Activated T-helper 1 cell treated with anti-CD3 and anti-CD28 coated beads, Interleukin-12 subunit alpha, Interleukin-12 subunit beta, Interleukin-2, Interleukin-4 antibody, amounts not matched to agents 30 ng/mL and 10 ng/mL and 1 ng/mL, durations not matched to agents 14 hours and 24 hours and 36 hours (primary cell): ENCODE measurements at regions of chr12 and their contacts with region 1.

Region 1: DNA sequence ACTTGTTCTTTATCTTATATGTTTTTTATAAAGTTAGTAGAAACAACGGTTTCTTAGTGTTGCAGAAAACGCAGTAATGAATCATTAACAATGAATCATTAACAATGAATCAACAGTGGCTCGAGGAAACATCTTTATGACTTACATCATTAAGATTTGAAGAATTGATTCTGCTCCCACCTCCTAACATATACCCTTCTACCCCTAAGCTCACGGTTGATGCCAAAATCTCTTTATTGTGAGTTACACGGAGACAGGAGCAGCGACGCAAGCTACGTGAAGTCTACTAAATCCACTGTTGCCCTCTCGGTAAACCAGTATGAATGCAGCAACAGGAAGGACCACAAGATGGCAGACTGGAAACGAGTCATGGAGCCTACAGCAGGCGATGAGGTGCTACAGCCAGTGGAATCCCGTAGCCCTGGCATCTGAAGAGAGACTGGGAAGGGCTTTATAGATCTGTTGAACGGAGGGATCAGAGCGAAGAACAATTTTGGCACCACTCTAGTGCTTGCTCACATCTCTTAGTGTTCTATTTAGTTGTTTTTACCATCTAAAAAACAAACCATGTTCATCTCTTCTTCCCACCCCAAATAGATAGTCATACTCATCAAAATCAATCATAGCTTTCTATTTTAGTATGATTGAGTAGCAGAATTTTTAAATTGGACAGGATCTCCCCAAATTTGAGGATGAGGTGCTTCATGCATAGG is 332.7 kb downstream of the DUSP6 start:
- DNase-seq: peak; percentile 73
- H3K4me3 Mint-ChIP-seq: no peak overlapping the region
- H3K27ac Mint-ChIP-seq: no peak overlapping the region
- H3K4me1 Mint-ChIP-seq: peaks cover 31% of the 10 kb centered on the region
- H3K27me3 Mint-ChIP-seq: peaks cover 12% of the 10 kb centered on the region

Region 2: DNA sequence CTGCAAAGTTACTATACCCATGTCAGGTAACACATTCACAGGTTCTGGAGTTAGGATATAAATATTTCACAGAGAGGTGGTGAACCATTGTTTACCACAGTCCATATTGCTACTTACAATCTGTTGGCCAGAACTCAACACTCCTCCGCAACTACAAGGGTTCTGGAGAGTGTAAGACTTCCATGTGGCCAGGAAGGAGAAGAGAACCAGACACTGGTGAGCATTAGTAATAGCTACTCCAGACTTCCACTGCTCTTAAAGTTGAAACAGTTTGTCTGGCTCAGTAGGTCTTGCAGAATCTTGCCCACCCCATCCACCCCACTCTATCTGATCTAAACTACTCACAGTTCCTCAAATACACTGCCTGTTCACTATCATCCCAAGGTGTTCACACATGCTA is 36.9 kb before region 1 on chr12:
- intact Hi-C with region 1: no loop called
- DNase-seq: no peak
- H3K4me3 Mint-ChIP-seq: no peak overlapping the region
- H3K27ac Mint-ChIP-seq: no peak overlapping the region
- H3K4me1 Mint-ChIP-seq: no peaks in the 10 kb centered on the region
- H3K27me3 Mint-ChIP-seq: peaks cover 11% of the 10 kb centered on the region

Region 3: DNA sequence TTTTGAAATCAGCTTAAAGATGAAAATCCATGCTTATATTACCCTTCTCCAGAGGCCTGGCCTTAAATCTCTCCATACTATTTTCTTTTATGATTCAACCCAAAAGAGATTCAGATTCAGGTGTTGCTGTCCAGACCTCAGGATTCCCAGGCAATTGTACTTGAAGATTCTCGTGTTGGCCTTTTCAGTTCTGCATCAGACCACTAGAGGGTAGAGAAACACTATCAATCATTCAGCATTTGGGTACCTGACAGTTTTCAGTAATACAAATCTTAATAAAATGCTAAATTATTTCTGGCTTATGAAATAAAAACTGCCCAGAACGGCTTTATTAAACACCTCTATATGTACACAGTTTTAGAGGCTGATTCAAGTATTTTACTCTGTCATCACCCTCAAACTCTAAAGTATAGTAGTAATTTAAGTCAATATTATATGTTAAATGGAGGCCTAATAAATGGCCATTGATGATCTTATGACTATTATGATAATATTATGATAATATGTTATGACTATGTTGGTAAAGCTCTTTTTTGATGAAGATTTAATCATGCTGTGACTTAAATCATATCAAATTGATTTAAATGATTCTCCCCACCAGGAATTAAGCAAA is 31.6 kb after region 1 on chr12:
- intact Hi-C with region 1: loop called (anchors 1 kb)
- DNase-seq: no peak
- H3K4me3 Mint-ChIP-seq: no peak overlapping the region
- H3K27ac Mint-ChIP-seq: no peak overlapping the region
- H3K4me1 Mint-ChIP-seq: peaks cover 31% of the 10 kb centered on the region
- H3K27me3 Mint-ChIP-seq: no peaks in the 10 kb centered on the region

Region 4: DNA sequence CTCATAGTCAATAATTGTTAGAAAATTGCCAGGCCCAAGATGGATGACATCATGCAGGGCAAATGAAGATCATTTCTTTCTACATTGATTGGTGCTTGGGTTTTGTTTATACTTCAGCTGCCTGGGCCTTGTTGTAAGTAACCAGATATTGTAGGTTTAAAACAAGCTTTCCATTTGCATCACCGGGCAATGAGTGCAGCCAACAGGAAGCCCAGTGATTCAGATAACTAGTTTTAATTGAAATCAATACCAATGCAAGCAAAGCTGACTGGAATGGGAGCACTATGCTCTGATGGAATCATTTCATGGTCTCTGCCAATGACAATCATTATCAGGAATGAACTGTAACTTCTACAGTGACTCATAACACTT is 53.4 kb after region 1 on chr12:
- intact Hi-C with region 1: no loop called
- DNase-seq: no peak
- H3K4me3 Mint-ChIP-seq: no peak overlapping the region
- H3K27ac Mint-ChIP-seq: peak overlapping the region; percentile 5
- H3K4me1 Mint-ChIP-seq: peaks cover 31% of the 10 kb centered on the region
- H3K27me3 Mint-ChIP-seq: no peaks in the 10 kb centered on the region

Region 5: DNA sequence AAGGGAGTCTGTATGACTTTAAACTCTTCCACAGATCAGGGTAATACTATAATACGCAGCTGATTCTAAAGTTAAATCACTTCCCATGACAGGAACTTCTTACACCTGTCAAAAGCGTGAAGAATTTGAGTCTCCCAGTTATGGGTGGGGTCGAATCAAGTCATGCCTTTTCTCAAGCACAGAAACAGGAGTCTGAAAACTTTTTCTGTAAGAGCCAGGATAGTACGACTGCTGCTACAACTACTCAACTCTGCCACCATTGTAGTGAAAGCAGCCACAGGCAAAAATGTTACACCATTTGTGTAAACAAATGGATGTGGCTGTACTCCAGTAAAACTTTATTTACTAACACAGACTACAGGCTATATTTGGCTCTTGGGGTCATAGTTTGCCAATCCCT is 242.4 kb after region 1 on chr12:
- intact Hi-C with region 1: loop called (anchors 1 kb)
- DNase-seq: no peak
- H3K4me3 Mint-ChIP-seq: no peak overlapping the region
- H3K27ac Mint-ChIP-seq: no peak overlapping the region
- H3K4me1 Mint-ChIP-seq: peaks cover 34% of the 10 kb centered on the region
- H3K27me3 Mint-ChIP-seq: no peaks in the 10 kb centered on the region

Region 6: DNA sequence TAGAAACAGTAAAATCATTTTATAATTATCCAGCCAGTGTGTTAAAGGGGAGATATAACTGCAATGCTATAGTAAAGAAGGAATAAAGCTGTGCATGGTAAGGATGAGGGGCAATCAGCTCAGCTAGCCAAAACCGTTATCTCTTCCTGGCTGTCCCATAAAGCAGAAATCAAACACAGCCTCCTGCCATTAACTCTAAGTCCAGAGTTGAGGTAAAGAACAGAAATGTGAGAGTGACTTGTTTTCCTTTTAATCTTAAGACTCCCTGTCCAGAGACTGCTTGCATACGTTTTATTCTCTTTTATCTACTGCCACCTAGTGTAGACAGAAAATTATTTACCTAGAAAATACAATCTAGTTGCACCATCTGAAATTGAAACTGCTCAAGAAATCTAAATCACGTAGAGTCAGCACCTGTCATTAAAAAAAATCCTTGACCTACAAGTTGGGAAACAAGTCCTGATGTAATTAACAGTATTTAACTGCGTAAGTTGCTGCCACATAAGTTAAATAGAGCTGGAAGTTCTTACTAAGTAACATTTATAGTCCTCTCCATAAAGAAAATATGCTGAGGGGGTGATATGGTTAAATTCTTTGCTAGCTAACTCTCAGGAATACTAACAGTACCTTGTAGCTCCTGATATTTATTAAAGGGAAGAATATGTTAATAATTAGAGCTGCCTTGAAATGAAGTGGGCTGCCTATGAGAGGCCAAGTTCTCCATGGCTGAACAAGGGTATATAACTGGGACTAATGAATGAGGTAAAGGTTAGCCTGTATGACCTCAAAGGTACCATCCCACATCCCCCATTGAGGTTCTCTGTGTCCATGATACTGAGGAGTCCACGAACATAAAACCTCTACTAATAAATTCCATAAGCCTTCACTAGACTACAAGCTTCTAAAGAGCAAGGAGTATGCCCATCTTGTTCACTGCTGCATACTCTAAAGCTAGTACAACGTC is 442.4 kb after region 1 on chr12:
- intact Hi-C with region 1: loop called (anchors 1 kb)
- DNase-seq: no peak
- H3K4me3 Mint-ChIP-seq: peak overlapping the region; percentile 60
- H3K27ac Mint-ChIP-seq: peak overlapping the region; percentile 36
- H3K4me1 Mint-ChIP-seq: peaks cover 43% of the 10 kb centered on the region
- H3K27me3 Mint-ChIP-seq: no peaks in the 10 kb centered on the region

Region 7: GRCh38 chr12:89494411-89495231 is 475.1 kb after region 1 on chr12:
- intact Hi-C with region 1: loop called (anchors 1 kb)
- DNase-seq: peak; percentile 16
- H3K4me3 Mint-ChIP-seq: peak overlapping the region; percentile 50
- H3K27ac Mint-ChIP-seq: peak overlapping the region; percentile 92
- H3K4me1 Mint-ChIP-seq: peaks cover 34% of the 10 kb centered on the region
- H3K27me3 Mint-ChIP-seq: no peaks in the 10 kb centered on the region

Region 8: GRCh38 chr12:89862511-89863179 is 843.1 kb after region 1 on chr12:
- intact Hi-C with region 1: loop called (anchors 10 kb)
- DNase-seq: peak; percentile 44
- H3K4me3 Mint-ChIP-seq: peak overlapping the region; percentile 76
- H3K27ac Mint-ChIP-seq: peak overlapping the region; percentile 95
- H3K4me1 Mint-ChIP-seq: peaks cover 60% of the 10 kb centered on the region
- H3K27me3 Mint-ChIP-seq: no peaks in the 10 kb centered on the region